ENCODE measurements at regions of chr12 and their contacts with region 1.

Region 1: GRCh38 chr12:89919241-89919906 is 210.7 kb upstream of the ATP2B1 start:
- DNase-seq: no peak
- ATAC-seq: no peak
- H3K4me3 ChIP-seq: no peak overlapping the region
- H3K4me3 Mint-ChIP-seq: no peak overlapping the region
- H3K27ac ChIP-seq: no peak overlapping the region
- H3K27ac Mint-ChIP-seq: no peak overlapping the region
- H3K4me1 ChIP-seq: no peaks in the 10 kb centered on the region
- H3K4me1 Mint-ChIP-seq: peaks cover 5 to 7% (median 6%) of the 10 kb centered on the region in 3 donors
- H3K27me3 ChIP-seq: no peaks in the 10 kb centered on the region
- H3K27me3 Mint-ChIP-seq: no peaks in the 10 kb centered on the region

Region 2: GRCh38 chr12:89893972-89894706 is 25.2 kb before region 1 on chr12:
- CTCF ChIA-PET with region 1: no interaction called
- POLR2A ChIA-PET with region 1: interaction called, 3 to 10 read pairs
- DNase-seq: no peak
- ATAC-seq: no peak
- H3K4me3 ChIP-seq: no peak overlapping the region
- H3K4me3 Mint-ChIP-seq: no peak overlapping the region
- H3K27ac ChIP-seq: no peak overlapping the region
- H3K27ac Mint-ChIP-seq: peak overlapping the region; percentile 11 to 36
- H3K4me1 ChIP-seq: peaks cover 0 to 11% of the 10 kb centered on the region in 2 experiments
- H3K4me1 Mint-ChIP-seq: peaks cover 26 to 36% (median 35%) of the 10 kb centered on the region in 3 donors
- H3K27me3 ChIP-seq: no peaks in the 10 kb centered on the region
- H3K27me3 Mint-ChIP-seq: no peaks in the 10 kb centered on the region

Region 3: GRCh38 chr12:89988188-89988915 is 69.0 kb after region 1 on chr12:
- CTCF ChIA-PET with region 1: no interaction called
- POLR2A ChIA-PET with region 1: no interaction called
- DNase-seq: no peak
- ATAC-seq: no peak
- H3K4me3 ChIP-seq: no peak overlapping the region
- H3K4me3 Mint-ChIP-seq: no peak overlapping the region
- H3K27ac ChIP-seq: no peak overlapping the region
- H3K27ac Mint-ChIP-seq: no peak overlapping the region
- H3K4me1 ChIP-seq: peaks cover 5 to 12% of the 10 kb centered on the region in 2 experiments
- H3K4me1 Mint-ChIP-seq: peaks cover 15 to 24% (median 17%) of the 10 kb centered on the region in 3 donors
- H3K27me3 ChIP-seq: no peaks in the 10 kb centered on the region
- H3K27me3 Mint-ChIP-seq: no peaks in the 10 kb centered on the region

Region 4: GRCh38 chr12:90245391-90245790 is 326.0 kb after region 1 on chr12:
- CTCF ChIA-PET with region 1: no interaction called
- POLR2A ChIA-PET with region 1: no interaction called
- DNase-seq: no peak
- ATAC-seq: no peak
- H3K4me3 ChIP-seq: no peak overlapping the region
- H3K4me3 Mint-ChIP-seq: no peak overlapping the region
- H3K27ac ChIP-seq: no peak overlapping the region
- H3K27ac Mint-ChIP-seq: no peak overlapping the region
- H3K4me1 ChIP-seq: no peaks in the 10 kb centered on the region
- H3K4me1 Mint-ChIP-seq: no peaks in the 10 kb centered on the region
- H3K27me3 ChIP-seq: peaks cover 0 to 3% of the 10 kb centered on the region in 2 experiments
- H3K27me3 Mint-ChIP-seq: peaks cover 0 to 4% of the 10 kb centered on the region in 2 donors